ENCODE measurements at regions of chr6 and their contacts with region 1.

Region 1: DNA sequence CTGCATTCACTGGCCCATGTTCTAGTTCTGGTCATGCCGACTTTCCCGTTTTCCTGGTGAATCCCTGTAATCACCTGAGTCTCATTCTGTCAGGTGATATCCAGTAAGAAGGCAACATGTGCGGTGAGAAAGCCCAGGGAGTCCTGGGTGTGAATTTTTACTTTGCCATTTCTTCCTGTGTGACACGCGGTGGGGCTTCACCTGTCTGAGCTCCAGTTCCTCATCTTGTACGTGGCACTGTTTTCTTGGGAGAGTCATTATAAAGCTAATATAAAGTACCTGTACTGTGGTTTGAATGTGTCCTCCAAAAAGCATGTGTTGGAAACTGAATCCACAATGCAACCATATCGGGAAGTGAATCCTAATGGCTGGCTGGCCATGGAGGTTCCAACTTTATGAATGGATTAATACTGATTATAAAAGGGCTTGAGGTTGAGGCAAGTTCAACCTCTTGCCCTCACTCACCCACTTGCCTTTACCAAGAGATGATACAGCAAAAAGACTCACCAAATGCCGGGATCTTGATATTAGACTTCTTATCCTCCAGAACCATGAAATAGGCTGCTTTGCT is 5.1 kb downstream of the HLA-E start:
- DNase-seq: no peak
- H3K4me3 ChIP-seq: no peak overlapping the region
- H3K27ac ChIP-seq: no peak overlapping the region
- H3K4me1 ChIP-seq: peaks cover 17% of the 10 kb centered on the region
- H3K27me3 ChIP-seq: no peaks in the 10 kb centered on the region
- CTCF ChIP-seq: no peak

Region 2: DNA sequence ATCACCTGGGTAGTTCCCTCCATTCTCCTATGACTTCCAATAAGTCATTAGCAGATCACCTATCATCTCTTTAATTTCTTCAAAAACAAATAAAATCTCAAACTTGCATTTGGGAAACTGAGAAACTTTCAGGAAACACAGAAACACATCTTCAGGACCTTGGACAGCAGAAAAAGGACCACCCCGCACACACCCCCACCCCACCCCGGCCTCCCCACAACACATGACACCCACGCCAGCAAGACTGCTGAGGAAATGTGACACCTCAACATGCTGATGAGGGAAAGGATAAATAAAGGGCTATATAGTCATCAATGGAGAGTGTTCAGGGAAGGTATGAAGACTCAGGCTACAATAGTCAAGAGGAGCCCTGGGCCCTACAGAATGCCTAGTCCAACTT is 183.3 kb before region 1 on chr6:
- CTCF ChIA-PET with region 1: no interaction called
- POLR2A ChIA-PET with region 1: no interaction called
- intact Hi-C with region 1: no loop called
- DNase-seq: no peak
- H3K4me3 ChIP-seq: no peak overlapping the region
- H3K27ac ChIP-seq: no peak overlapping the region
- H3K4me1 ChIP-seq: no peaks in the 10 kb centered on the region
- H3K27me3 ChIP-seq: no peaks in the 10 kb centered on the region
- CTCF ChIP-seq: no peak

Region 3: GRCh38 chr6:30453508-30454116 is 40.8 kb before region 1 on chr6:
- CTCF ChIA-PET with region 1: no interaction called
- POLR2A ChIA-PET with region 1: no interaction called
- intact Hi-C with region 1: no loop called
- DNase-seq: peak; percentile 59 to 87
- H3K4me3 ChIP-seq: no peak overlapping the region
- H3K27ac ChIP-seq: no peak overlapping the region
- H3K4me1 ChIP-seq: no peaks in the 10 kb centered on the region
- H3K27me3 ChIP-seq: peaks cover 82% of the 10 kb centered on the region
- CTCF ChIP-seq: peak; percentile 80

Region 4: DNA sequence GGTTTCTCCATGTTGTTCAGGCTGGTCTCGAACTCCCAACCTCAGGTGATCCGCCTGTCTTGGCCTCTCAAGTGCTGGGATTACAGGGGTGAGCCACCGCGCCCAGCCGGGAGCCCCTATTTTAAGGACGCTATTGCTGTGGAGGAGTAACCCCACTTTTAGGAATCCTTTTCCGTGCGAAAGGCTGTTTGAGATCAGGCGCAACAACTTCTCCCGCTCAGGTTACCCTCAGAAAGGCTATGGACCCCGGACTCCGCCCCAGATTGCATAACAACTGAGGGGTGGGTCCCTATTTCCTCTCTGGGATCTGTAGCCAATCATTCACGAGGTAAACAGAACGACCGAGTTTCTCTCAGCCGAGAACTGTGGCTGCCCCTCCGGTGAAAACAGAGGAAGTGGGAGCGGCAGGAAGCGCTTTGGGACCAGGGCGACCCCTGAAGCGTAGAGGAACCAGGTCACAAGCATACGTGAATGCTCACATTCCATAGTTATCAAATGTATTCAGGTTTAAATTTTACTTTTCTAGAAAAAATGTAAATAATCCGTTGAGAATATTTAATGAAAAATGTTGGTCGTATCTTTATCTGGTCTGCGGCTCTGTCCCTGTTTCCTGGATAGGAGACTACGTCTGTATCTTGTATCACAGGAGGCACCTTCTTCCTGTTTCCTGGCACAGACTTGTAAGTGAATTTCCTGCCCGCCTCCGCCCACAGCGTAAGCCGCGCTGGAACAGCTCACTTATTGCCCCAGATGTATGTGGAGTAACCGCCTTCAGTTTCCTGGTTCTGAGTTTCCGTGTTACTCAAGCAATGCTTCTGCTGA is 21.8 kb after region 1 on chr6:
- CTCF ChIA-PET with region 1: no interaction called
- POLR2A ChIA-PET with region 1: interaction called, 9 read pairs
- intact Hi-C with region 1: loop called (anchors 1 kb)
- DNase-seq: peak; percentile 87 to 96
- H3K4me3 ChIP-seq: peak overlapping the region; percentile 58
- H3K27ac ChIP-seq: peak overlapping the region; percentile 96
- H3K4me1 ChIP-seq: peaks cover 15% of the 10 kb centered on the region
- H3K27me3 ChIP-seq: no peaks in the 10 kb centered on the region
- CTCF ChIP-seq: no peak

Region 5: DNA sequence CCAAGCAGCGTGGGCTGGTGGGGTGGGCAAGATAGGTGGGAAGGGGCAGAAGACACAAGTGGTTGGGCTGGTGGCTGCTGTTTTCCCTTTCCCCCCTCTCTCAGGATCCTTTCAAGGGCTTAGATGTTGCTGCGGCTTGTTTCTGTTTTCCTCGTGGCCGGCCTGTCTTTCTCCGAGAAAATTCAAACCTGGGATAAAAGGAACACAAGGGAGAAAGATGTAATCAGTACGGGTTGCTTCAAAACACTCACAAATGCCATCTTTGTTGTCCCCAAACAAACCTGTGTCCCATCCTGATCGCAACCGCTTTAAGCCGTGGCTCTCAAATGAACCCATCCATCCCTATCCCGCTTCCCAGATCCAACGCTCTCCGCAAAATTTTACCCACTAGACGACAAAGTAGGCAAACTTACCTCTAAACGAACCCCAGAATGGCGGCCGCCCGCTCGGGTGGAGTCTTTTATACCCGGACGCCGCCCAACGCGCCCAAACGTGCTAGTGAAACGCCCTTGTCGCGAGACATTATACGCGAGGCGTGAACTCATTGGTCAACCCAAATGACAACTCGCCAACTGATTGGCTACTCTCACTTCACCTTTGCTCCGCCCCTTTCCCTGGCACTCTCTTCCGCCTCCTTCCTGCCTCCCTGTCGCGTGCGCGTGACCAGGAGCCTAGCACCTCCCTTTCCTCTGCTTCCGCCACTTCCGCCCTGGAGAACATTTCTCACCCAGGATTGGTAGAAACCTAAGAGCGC is 122.6 kb after region 1 on chr6 and contains the start of gene PPP1R10:
- CTCF ChIA-PET with region 1: no interaction called
- POLR2A ChIA-PET with region 1: no interaction called
- intact Hi-C with region 1: no loop called
- DNase-seq: peak; percentile 98 to 99
- H3K4me3 ChIP-seq: peak within 1 kb of the TSS; percentile 87
- H3K27ac ChIP-seq: peak within 1 kb of the TSS; percentile 86
- H3K4me1 ChIP-seq: peaks cover 35% of the 10 kb centered on the region
- H3K27me3 ChIP-seq: no peaks in the 10 kb centered on the region
- CTCF ChIP-seq: no peak
- total RNA-seq, gene PPP1R10: 47.6 and 69.5 TPM in 2 replicates